CD4-positive, alpha-beta T cell (primary cell): ENCODE measurements at regions of chr1 and their contacts with region 1.

Region 1: DNA sequence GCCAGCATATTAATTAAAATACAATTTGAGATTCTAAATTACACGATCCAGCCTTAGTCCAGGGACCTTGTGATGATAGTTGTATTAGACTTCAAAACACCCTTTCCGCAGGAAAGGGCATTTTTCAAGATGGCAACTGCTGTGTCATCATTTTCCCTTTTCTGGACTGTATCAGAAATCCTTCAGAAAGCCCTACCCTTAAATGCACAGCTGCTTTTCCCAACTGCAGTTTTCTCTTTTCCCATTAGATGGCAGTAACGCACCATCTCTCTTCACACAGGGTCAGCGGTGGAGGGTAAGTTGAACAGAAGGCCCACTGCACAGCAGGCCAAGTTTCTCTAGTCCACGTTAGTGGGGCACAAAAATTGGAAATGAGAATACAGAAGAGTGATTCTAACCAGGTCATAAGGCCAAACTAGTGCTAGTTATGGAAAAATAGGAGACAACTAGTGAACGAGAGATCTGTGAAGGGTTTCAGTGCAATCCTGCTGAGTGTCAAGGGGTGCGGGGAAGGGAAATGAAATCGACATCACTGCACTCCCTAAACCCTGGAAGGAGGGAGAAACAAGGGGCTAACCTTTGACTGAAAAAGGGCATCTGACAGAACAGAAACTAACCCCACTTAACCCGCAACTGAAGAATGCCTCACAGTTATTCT is 22.1 kb upstream of the TDRD10 start:
- DNase-seq: peak in 13 of 14 experiments; percentile 23 to 84 (median 43)
- ATAC-seq: peak; percentile 91
- H3K4me3 ChIP-seq: no peak overlapping the region
- H3K4me3 Mint-ChIP-seq: no peak overlapping the region
- H3K27ac ChIP-seq: no peak overlapping the region
- H3K27ac Mint-ChIP-seq: no peak overlapping the region
- H3K4me1 ChIP-seq: peaks cover 7% of the 10 kb centered on the region
- H3K4me1 Mint-ChIP-seq: peaks cover 20% of the 10 kb centered on the region
- H3K27me3 ChIP-seq: no peaks in the 10 kb centered on the region
- H3K27me3 Mint-ChIP-seq: no peaks in the 10 kb centered on the region
- CTCF ChIP-seq: peak; percentile 90

Region 2: GRCh38 chr1:154272217-154272998 is 207.5 kb before region 1 on chr1 and contains the start of gene HAX1:
- CTCF ChIA-PET with region 1: no interaction called
- POLR2A ChIA-PET with region 1: no interaction called
- intact Hi-C with region 1: loop called in 1 of 2 experiments (anchors 5 kb)
- DNase-seq: peak; percentile 90 to 99 (median 94)
- ATAC-seq: peak; percentile 85
- H3K4me3 ChIP-seq: peak within 1 kb of the TSS; percentile 82
- H3K4me3 Mint-ChIP-seq: peak within 1 kb of the TSS; percentile 96
- H3K27ac ChIP-seq: peak within 1 kb of the TSS; percentile 81 to 89
- H3K27ac Mint-ChIP-seq: peak within 1 kb of the TSS; percentile 97
- H3K4me1 ChIP-seq: peaks cover 27% of the 10 kb centered on the region
- H3K4me1 Mint-ChIP-seq: peaks cover 37% of the 10 kb centered on the region
- H3K27me3 ChIP-seq: no peaks in the 10 kb centered on the region
- H3K27me3 Mint-ChIP-seq: no peaks in the 10 kb centered on the region
- CTCF ChIP-seq: peak; percentile 76
- total RNA-seq, gene HAX1: 57.5 to 62.5 TPM

Region 3: GRCh38 chr1:154442006-154442740 is 37.7 kb before region 1 on chr1:
- CTCF ChIA-PET with region 1: interaction called, 7 read pairs
- POLR2A ChIA-PET with region 1: no interaction called
- intact Hi-C with region 1: loop called in 1 of 2 experiments (anchors 5 kb)
- DNase-seq: peak in 1 of 14 experiments; percentile 47
- ATAC-seq: peak; percentile 6
- H3K4me3 ChIP-seq: peak overlapping the region; percentile 20
- H3K4me3 Mint-ChIP-seq: peak overlapping the region; percentile 81
- H3K27ac ChIP-seq: peak overlapping the region; percentile 72 to 75
- H3K27ac Mint-ChIP-seq: peak overlapping the region; percentile 94
- H3K4me1 ChIP-seq: peaks cover 77% of the 10 kb centered on the region
- H3K4me1 Mint-ChIP-seq: peaks cover 75% of the 10 kb centered on the region
- H3K27me3 ChIP-seq: no peaks in the 10 kb centered on the region
- H3K27me3 Mint-ChIP-seq: no peaks in the 10 kb centered on the region
- CTCF ChIP-seq: peak; percentile 34

Region 4: DNA sequence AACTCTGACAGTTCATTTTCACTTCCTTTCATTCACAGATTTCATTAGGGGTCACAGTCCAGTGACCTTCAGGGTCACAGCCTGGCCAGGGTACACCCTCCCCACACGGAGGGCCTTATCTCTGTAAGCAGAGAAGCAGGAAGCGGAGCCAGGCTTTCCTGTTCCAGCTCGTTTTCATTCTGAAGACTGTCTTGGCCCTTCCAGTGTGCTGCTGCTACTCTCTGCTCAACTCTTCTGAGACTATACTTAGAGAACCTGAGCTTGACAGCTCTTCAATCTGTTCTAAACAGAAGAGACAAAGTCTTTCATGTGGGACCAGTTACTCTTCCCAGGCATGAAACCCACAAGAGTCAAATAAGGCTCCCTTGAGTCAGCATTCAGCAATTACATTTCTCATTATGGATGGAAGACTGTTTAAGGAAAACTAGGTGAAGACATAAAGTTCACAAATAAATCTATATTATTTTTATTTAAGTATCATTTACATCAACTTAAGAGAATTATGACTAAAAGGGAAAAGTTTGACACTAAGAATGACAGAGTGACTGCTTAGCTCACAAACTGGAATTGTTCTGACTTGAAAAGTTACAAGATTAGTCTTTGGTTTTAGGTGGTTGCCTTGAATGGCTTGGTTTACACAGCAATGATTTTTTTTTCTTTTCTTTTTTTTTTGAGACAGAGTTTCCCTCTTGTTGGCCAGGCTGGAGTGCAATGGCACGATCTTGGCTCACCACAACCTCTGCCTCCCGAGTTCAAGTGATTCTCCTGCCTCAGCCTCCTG is 17.3 kb after region 1 on chr1:
- CTCF ChIA-PET with region 1: interaction called, 11 read pairs
- POLR2A ChIA-PET with region 1: interaction called, 3 read pairs
- intact Hi-C with region 1: no loop called
- DNase-seq: peak in 4 of 14 experiments; percentile 16 to 27 (median 21)
- ATAC-seq: peak; percentile 70
- H3K4me3 ChIP-seq: no peak overlapping the region
- H3K4me3 Mint-ChIP-seq: peak overlapping the region; percentile 17
- H3K27ac ChIP-seq: peak overlapping the region in 1 of 2 donors; percentile 44
- H3K27ac Mint-ChIP-seq: peak overlapping the region; percentile 61
- H3K4me1 ChIP-seq: peaks cover 35% of the 10 kb centered on the region
- H3K4me1 Mint-ChIP-seq: peaks cover 52% of the 10 kb centered on the region
- H3K27me3 ChIP-seq: peaks cover 10 to 25% of the 10 kb centered on the region in 2 experiments
- H3K27me3 Mint-ChIP-seq: peaks cover 28% of the 10 kb centered on the region
- CTCF ChIP-seq: no peak

Region 5: GRCh38 chr1:154760469-154760933 is 280.6 kb after region 1 on chr1:
- CTCF ChIA-PET with region 1: interaction called, 3 read pairs
- POLR2A ChIA-PET with region 1: no interaction called
- intact Hi-C with region 1: loop called (anchors 1 to 5 kb)
- DNase-seq: peak; percentile 70 to 92 (median 83)
- ATAC-seq: peak; percentile 88
- H3K4me3 ChIP-seq: peak overlapping the region; percentile 44
- H3K4me3 Mint-ChIP-seq: no peak overlapping the region
- H3K27ac ChIP-seq: no peak overlapping the region
- H3K27ac Mint-ChIP-seq: no peak overlapping the region
- H3K4me1 ChIP-seq: peaks cover 21% of the 10 kb centered on the region
- H3K4me1 Mint-ChIP-seq: peaks cover 42% of the 10 kb centered on the region
- H3K27me3 ChIP-seq: no peaks in the 10 kb centered on the region
- H3K27me3 Mint-ChIP-seq: no peaks in the 10 kb centered on the region
- CTCF ChIP-seq: peak; percentile 92